ENCODE measurements at regions of chr1 and their contacts with region 1.

Region 1: DNA sequence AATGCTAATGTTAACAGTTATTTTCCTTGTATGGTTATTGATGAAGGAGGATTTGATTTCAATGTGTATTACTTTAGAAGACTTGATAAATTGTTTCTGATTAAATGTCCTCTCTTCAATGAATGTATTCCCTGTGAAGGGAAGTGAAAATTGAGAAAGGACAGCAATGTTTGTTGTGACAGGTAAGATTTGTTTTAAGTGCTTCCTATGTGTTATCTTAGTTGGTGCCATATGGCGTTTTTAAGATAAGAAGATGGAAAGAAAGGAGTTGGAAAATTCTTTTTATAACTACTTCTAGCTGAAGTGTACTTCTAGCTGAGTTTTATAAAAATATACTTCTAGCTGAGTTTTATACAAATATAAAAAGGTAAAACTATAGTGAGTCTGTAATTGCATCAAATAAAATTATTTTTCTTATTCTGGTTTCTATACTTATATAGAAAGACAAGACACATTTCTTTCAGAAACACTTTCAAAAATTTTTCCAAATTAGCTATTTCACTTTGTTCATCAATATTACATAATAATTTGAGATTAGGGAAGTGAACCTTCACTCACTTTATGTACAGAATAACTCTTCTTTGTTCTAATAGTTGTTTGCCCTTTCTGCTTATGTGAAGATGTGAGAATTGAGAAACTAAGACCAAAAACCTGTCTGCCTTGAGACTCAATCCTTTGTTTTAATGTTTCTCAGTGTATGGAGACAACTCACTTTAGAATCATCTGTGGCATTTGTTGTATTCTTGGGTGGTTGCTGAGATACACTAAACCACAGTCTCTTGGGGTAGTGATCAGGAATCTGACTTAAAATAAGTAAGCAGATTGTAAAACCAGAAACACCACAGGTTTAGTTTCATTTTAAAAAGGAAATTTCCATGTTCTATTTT is 382.9 kb upstream of the B3GALT2 start:
- DNase-seq: peak; percentile 26
- H3K4me3 Mint-ChIP-seq: peak overlapping the region; percentile 25
- H3K27ac Mint-ChIP-seq: peak overlapping the region; percentile 81
- H3K4me1 Mint-ChIP-seq: peaks cover 36% of the 10 kb centered on the region
- H3K27me3 Mint-ChIP-seq: no peaks in the 10 kb centered on the region

Region 2: DNA sequence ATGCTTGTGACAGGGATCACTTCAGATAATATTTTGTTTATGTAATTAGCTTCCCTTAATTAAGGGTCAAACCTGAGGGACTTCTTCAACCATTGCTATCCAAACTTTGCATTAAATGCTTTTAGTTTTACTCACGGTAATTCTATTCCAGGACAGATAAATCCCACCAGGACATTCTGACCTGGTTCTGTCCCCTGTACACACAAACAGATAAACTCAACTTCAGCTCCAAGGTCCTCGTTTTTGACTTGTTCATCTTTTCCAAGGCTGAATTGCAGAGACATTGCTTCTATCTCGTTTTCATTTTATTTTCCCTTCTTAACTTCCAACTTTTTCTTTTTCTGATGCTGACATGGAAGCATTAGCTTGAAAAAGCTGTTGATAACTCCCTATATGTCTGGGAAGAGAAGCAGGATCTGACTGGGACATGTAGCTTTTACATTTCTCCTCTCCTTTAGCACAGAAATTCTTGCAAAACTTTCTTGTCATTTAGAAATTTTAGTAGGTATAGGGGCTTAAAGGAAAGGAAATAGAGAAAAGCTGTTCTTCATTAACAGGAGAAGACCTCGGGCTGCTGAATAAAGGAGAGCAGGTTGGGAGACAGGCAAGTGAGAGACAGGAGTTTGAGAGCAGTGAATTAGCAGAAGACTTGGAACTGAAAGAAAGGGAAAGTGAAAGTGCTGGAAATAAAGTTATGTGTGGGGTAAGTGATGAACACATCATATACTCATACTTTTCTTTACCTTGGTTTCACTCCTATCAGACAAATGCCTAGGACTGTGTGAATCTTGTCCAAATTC is 151.2 kb before region 1 on chr1:
- intact Hi-C with region 1: loop called (anchors 1 kb)
- DNase-seq: no peak
- H3K4me3 Mint-ChIP-seq: peak overlapping the region; percentile 36
- H3K27ac Mint-ChIP-seq: peak overlapping the region; percentile 40
- H3K4me1 Mint-ChIP-seq: peaks cover 56% of the 10 kb centered on the region
- H3K27me3 Mint-ChIP-seq: peaks cover 5% of the 10 kb centered on the region

Region 3: DNA sequence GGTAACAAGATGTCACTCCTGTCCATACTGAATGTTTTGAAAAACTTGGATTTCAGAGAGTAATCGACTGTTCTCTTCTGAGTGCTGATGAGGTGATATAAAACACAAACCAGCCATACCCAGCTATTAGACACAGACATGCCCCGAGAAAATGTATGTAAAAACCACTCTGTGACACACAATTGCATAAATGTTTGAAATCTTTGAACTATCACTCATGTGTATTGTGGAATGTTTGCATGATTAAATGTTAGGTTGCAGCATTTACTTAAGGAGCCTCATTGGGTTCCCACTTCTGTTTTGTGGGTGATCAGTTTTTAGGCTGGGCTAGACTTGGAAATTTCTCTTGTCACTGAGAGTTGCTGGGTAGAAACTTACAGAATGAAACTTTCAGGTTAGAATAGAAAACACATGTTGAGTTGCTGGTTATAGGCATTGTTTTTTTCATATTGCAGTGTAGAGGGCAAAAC is 112.5 kb before region 1 on chr1:
- intact Hi-C with region 1: loop called (anchors 2 kb)
- DNase-seq: no peak
- H3K4me3 Mint-ChIP-seq: no peak overlapping the region
- H3K27ac Mint-ChIP-seq: no peak overlapping the region
- H3K4me1 Mint-ChIP-seq: peaks cover 25% of the 10 kb centered on the region
- H3K27me3 Mint-ChIP-seq: no peaks in the 10 kb centered on the region

Region 4: DNA sequence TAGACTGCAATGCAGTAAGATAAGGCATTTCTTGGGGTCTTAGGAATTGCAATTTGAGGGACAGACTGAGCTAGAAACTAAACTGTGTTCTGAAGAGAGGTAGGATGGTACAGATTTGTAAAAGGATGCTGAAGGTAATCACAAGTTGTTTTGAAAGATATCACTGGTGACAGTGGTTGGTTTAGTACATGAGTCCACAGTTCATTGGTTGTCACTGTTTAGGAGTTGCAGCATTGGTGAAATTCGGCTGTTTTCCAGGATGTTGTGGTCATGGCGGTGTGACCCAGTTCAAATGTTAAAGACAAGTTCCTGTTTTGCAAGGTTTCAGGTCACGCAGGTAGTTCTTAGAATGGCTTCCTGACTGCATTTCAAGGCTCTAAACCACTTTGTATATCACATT is 90.2 kb before region 1 on chr1:
- intact Hi-C with region 1: loop called (anchors 1 kb)
- DNase-seq: peak; percentile 84
- H3K4me3 Mint-ChIP-seq: peak overlapping the region; percentile 30
- H3K27ac Mint-ChIP-seq: peak overlapping the region; percentile 86
- H3K4me1 Mint-ChIP-seq: peaks cover 78% of the 10 kb centered on the region
- H3K27me3 Mint-ChIP-seq: no peaks in the 10 kb centered on the region

Region 5: DNA sequence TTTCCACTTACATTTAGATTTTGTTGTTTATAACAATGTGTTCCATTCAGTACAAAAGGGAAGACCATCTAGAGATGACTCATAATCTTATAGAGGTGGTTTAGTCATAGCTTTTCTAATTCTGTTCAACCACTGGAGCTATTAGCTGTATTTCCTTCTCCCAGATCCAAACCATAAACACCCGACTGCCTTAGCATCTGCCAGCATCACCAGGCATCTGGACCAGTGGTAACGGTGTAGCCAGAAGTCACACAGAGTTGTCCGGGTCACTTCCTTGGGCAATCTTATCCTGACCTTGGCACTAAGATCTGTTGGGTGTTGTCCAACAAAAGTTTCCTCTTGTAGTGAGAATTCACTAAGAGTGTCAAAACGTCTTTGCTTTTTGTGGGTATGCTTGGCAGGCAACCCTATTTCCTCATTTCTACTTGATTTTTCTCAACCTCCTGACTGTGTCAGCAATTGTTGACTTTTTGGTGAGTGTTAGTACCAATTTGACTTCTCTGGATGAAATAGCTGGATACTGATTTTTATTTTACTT is 10.8 kb before region 1 on chr1:
- intact Hi-C with region 1: loop called (anchors 1 kb)
- DNase-seq: no peak
- H3K4me3 Mint-ChIP-seq: peak overlapping the region; percentile 15
- H3K27ac Mint-ChIP-seq: peak overlapping the region; percentile 73
- H3K4me1 Mint-ChIP-seq: peaks cover 17% of the 10 kb centered on the region
- H3K27me3 Mint-ChIP-seq: peaks cover 4% of the 10 kb centered on the region

Region 6: GRCh38 chr1:193592317-193592716 is 23.0 kb after region 1 on chr1:
- intact Hi-C with region 1: loop called (anchors 1 kb)
- DNase-seq: no peak
- H3K4me3 Mint-ChIP-seq: peak overlapping the region; percentile 34
- H3K27ac Mint-ChIP-seq: peak overlapping the region; percentile 49
- H3K4me1 Mint-ChIP-seq: peaks cover 33% of the 10 kb centered on the region
- H3K27me3 Mint-ChIP-seq: no peaks in the 10 kb centered on the region

Region 7: DNA sequence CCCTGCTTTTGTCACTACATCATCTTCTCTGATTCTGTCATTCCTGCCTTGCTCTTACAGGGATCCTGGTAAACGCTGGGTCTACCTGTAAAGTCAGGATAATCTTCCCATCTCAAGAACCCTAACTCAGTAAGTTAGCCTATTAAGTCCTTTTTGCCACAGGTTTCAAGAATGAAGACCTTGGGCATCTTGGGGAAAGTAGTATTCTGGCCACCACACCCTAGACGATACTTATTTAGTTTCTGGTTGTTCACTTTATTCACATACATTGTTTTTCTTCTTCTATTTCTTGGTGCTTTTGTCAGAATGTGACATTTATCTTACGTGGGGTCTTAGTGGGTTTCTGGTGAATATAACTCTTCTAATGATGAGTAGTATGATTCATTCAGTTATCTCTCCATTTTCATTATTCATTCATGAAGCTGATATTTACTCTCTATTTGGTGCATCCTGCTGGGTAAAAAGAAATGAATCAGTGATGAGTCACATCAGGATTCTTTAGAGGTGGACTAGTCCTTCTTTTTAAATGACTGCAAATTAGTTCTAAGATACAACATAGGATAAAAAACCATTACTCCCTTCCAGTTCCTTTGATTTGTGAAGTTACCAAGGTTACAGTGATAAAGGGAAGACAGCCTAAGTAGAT is 131.5 kb after region 1 on chr1:
- intact Hi-C with region 1: loop called (anchors 1 kb)
- DNase-seq: no peak
- H3K4me3 Mint-ChIP-seq: no peak overlapping the region
- H3K27ac Mint-ChIP-seq: peak overlapping the region; percentile 20
- H3K4me1 Mint-ChIP-seq: peaks cover 15% of the 10 kb centered on the region
- H3K27me3 Mint-ChIP-seq: no peaks in the 10 kb centered on the region

Region 8: DNA sequence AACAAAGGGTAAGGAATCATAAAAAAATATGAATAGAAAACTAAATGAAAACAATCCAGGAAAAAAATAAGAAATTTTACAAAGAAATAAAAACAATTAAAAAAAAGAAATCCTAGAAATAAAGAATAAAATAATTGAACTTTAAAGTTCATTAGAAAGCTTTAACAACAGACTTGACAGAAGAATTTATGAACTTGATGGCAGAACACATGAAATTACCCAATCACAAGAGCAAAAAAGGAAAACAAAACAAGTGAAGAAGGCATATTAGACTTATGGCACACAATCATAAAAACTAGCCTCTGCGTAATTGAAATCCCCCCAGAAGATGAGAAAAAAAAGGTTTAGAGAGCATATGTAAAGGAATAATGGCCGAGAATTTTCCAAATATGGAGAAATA is 419.5 kb after region 1 on chr1:
- intact Hi-C with region 1: no loop called
- DNase-seq: no peak
- H3K4me3 Mint-ChIP-seq: no peak overlapping the region
- H3K27ac Mint-ChIP-seq: no peak overlapping the region
- H3K4me1 Mint-ChIP-seq: no peaks in the 10 kb centered on the region
- H3K27me3 Mint-ChIP-seq: no peaks in the 10 kb centered on the region